ENCODE measurements at regions of chr2 and their contacts with region 1.

Region 1: DNA sequence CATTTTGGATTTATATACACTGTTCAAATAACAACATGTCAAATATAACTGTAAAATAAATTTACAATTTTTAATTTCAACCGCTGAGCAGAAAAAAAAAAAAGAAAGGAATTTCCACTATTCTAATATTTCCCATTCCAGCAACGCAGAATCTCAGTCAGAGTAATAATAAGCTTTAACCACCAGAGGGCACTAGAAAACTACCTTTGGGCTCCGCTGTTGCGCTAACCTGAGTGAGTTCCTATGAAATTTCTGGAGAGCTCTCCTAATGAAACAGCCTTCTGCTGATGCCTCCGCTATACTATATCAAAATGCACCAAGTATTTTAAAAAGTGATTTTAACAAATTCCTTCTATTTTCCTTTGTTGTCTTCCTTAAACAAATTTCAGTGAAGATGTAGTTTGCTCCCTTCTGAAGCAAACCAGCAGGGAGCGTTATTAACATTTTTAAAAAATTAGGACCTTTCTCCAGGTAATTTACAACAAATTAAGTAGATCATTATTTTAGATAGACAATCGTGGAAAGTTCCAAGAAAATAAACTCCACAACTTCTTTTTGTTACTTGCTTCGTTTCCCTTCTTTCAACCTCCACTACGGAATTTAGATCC is 23.0 kb downstream of the ERMN start:
- DNase-seq: no peak
- ATAC-seq: peak; percentile 76
- H3K4me3 Mint-ChIP-seq: no peak overlapping the region
- H3K27ac Mint-ChIP-seq: no peak overlapping the region
- H3K4me1 Mint-ChIP-seq: peaks cover 18% of the 10 kb centered on the region
- H3K27me3 Mint-ChIP-seq: peaks cover 6% of the 10 kb centered on the region

Region 2: DNA sequence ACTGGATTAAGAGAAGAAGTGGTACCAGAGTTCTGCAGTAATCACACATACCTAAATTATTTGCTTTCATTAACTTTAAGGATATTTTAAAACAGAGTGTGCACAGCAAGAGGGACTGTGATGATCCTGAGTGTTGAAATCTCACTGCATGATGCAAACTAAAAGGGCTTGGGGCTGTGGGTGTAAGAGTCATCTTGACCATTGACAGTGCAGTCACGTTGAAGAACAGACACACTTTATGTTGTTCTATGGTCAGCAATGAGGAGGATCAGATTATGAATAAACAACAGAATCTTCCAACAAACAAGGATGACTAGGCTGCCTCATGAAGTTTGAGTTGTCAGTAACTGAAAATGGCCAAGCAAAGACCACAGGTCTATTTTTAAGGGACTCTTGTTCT is 132.3 kb before region 1 on chr2:
- CTCF ChIA-PET with region 1: no interaction called
- DNase-seq: no peak
- ATAC-seq: no peak
- H3K4me3 Mint-ChIP-seq: no peak overlapping the region
- H3K27ac Mint-ChIP-seq: no peak overlapping the region
- H3K4me1 Mint-ChIP-seq: no peaks in the 10 kb centered on the region
- H3K27me3 Mint-ChIP-seq: peaks cover 27% of the 10 kb centered on the region

Region 3: DNA sequence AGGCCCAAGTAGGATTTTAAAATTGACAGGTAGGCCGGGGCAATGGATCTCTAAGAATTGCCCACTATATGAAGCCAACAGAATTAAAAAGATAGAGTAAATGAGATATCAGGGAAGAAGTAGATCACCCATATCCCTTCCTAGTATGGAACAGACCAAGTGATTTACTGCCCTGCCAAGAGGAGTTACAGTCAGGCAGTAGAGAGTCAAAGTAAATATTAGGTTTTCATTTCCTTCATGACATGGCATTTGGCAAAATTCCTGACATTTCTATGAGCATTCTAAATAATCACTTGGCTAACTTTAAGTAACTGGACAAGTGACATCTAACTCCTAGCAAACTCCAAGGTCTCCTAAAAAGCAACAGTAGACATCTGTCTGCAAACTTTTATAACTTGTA is 11.6 kb before region 1 on chr2:
- CTCF ChIA-PET with region 1: interaction called, 12 read pairs
- DNase-seq: no peak
- ATAC-seq: no peak
- H3K4me3 Mint-ChIP-seq: no peak overlapping the region
- H3K27ac Mint-ChIP-seq: no peak overlapping the region
- H3K4me1 Mint-ChIP-seq: peaks cover 6% of the 10 kb centered on the region
- H3K27me3 Mint-ChIP-seq: no peaks in the 10 kb centered on the region

Region 4: DNA sequence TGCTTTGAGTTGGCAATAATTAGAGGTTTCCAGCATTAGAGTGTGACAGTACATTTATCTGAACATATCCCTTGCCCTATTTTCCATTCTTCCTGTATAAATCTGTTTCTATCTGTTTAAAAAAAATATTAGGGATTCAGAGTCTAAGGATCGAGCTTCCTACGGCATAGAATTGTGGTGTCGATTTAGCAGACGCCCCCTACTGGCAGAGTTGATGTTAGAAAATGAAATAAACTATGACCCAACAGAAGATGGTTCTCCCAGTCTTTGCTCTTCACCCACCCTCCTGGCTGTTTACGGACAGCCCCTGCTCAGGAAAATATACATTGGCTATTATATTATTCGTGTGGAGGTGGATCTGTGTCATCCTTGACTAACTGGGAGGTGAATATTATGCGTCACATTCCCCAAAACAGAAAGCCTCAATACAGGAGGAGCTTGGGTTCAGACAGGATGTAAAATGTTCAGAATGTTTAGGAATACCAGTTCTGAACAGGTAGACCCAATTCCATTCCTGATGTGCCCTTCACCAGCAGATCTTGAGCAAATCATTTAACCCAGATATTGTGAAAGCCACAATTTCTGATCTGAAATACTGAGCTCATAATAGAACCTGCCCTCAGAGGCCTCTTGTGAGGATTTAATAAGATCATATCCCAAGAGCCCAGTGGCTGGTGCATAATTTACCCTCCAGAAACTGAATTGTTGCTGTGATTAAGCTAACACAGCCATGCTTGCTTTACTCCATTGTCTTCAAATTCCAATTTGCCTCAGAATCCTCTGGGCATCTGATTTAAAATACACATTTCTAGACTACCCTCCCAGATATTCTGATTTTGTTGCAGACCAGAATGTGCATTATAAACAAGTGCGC is 33.8 kb after region 1 on chr2:
- CTCF ChIA-PET with region 1: interaction called, 17 read pairs
- DNase-seq: peak; percentile 45
- ATAC-seq: peak; percentile 43
- H3K4me3 Mint-ChIP-seq: no peak overlapping the region
- H3K27ac Mint-ChIP-seq: no peak overlapping the region
- H3K4me1 Mint-ChIP-seq: peaks cover 38% of the 10 kb centered on the region
- H3K27me3 Mint-ChIP-seq: no peaks in the 10 kb centered on the region

Region 5: DNA sequence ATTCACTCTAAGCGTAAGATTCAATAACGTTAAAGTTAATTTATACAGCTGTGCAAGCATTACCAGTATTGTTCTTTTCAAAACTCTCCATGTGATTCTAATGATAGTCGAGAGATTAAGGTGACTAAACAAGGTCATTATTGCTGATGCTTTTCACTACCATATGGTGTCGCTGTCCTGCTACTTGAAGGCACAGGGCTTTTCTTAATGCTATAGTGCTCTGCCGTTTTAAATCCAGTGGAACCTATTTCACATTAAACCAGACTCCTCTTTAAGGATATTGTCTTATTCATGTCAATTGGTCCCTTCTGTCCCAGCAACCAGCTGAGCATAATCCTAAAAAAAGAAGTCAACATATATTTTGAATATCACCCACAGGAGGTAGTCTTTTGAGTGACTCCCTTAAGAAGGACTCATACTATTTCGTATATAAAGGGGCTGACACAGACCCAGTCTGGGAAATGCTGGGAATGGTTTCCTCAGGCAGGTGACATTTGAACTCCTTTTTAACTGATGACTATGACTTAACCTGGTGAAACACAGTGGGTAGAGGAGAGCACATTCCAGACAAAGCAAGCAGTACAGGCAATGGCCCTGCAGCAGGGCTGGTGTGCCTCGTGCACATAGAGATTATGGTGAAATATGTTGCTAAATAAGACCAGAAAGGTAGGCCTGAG is 195.2 kb after region 1 on chr2:
- CTCF ChIA-PET with region 1: interaction called, 49 read pairs
- DNase-seq: no peak
- ATAC-seq: peak; percentile 94
- H3K4me3 Mint-ChIP-seq: no peak overlapping the region
- H3K27ac Mint-ChIP-seq: no peak overlapping the region
- H3K4me1 Mint-ChIP-seq: peaks cover 28% of the 10 kb centered on the region
- H3K27me3 Mint-ChIP-seq: no peaks in the 10 kb centered on the region

Region 6: GRCh38 chr2:157628477-157629415 is 326.1 kb after region 1 on chr2 and contains the start of gene ACVR1C:
- CTCF ChIA-PET with region 1: interaction called, 36 read pairs
- DNase-seq: peak; percentile 81
- ATAC-seq: peak; percentile 90
- H3K4me3 Mint-ChIP-seq: peak within 1 kb of the TSS; percentile 79
- H3K27ac Mint-ChIP-seq: peak within 1 kb of the TSS; percentile 73
- H3K4me1 Mint-ChIP-seq: peaks cover 32% of the 10 kb centered on the region
- H3K27me3 Mint-ChIP-seq: peaks cover 19% of the 10 kb centered on the region
- total RNA-seq, gene ACVR1C: 1.2 to 2.4 TPM

Region 7: DNA sequence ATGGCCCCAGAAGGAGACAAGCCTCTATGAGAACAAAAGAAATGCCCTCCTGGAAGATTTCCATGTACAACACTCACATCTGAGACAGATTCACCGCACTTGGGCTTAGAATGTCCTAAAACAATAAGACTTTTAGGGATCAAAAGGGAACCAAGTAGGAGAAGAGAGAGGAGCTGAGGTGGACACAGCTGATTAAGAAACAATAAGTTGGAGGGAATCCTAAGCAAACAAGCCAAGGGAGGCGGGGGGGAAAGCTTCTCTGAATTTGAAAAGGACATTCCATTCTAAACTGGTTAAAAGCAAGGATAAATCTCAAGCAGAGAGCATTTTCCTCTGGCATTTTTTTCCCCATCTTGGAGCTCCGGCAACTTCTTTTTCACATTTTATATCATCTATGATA is 563.6 kb after region 1 on chr2:
- CTCF ChIA-PET with region 1: no interaction called
- DNase-seq: no peak
- ATAC-seq: no peak
- H3K4me3 Mint-ChIP-seq: no peak overlapping the region
- H3K27ac Mint-ChIP-seq: no peak overlapping the region
- H3K4me1 Mint-ChIP-seq: peaks cover 40% of the 10 kb centered on the region
- H3K27me3 Mint-ChIP-seq: no peaks in the 10 kb centered on the region